Mammary epithelial cell (primary cell): ENCODE measurements at regions of chr20 and their contacts with region 1.

Region 1: DNA sequence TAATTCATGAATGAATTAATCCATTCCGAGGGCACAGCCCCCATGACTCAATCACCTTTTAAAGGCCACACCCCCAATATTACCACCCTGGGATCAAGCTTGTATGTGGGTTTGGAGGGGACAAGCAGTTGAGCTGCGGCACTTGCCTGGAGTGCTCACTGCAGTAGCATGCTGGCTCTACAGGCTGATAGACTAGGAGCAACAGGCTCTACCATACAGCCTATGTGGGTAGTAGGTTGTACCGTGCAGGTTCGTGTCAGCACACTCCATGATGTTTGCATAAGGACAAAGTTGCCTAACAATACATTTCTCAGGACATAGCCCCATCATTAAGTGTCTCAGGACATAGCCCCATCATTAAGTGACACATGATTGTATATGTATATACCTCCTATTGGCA is 25.7 kb upstream of the TAF4 start:
- DNase-seq: no peak
- H3K4me3 ChIP-seq: no peak overlapping the region
- H3K27ac ChIP-seq: no peak overlapping the region
- H3K4me1 ChIP-seq: no peaks in the 10 kb centered on the region
- H3K27me3 ChIP-seq: no peaks in the 10 kb centered on the region
- CTCF ChIP-seq: no peak

Region 2: GRCh38 chr20:62059401-62059800 is 32.0 kb before region 1 on chr20:
- CTCF ChIA-PET with region 1: no interaction called
- dilution Hi-C with region 1: loop called (anchors 5 kb)
- in situ Hi-C with region 1: no loop called
- intact Hi-C with region 1: no loop called
- DNase-seq: no peak
- H3K4me3 ChIP-seq: no peak overlapping the region
- H3K27ac ChIP-seq: no peak overlapping the region
- H3K4me1 ChIP-seq: peaks cover 14% of the 10 kb centered on the region
- H3K27me3 ChIP-seq: no peaks in the 10 kb centered on the region
- CTCF ChIP-seq: no peak

Region 3: DNA sequence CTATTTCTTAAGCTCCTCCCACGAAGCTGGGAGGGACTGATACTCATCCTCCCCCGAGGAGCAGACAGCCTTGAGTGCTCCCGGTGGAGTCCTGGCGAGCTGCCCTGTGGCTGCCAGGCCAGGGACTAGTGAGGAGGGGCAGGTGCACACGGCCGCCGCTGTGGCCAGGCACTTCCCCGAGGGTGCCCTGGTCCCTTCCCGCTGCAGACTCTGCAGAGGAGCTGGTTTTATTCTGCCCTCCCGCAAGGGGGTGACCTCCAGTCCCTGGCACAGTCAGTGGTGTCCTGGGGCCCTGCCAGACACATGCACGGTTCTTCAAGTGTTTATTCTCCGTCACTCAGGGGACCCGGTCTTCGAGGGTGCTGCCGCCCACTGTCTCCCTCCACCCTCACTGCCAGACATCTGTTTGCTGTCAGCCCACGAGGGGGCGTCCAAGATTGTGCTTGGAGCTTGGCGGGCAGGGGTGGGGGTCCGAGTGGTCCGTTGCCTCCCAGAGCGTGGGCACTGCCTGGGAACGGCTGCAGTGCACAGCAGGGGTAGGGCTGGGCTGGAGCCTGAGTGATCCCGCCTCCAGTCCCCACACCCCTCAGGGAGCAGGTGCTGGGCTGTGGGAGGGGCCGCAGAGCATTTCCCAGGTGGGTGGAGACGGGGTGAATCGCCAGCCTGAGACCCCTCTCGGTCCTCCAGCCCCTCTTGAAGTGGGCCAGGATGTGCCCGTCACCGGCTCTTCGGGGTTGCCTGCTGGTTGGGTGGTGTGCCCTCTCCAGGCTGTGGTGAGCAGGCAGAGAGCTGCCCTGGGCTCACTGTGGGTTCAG is 318.7 kb after region 1 on chr20:
- CTCF ChIA-PET with region 1: no interaction called
- dilution Hi-C with region 1: no loop called
- in situ Hi-C with region 1: no loop called
- intact Hi-C with region 1: no loop called
- DNase-seq: no peak
- H3K4me3 ChIP-seq: no peak overlapping the region
- H3K27ac ChIP-seq: no peak overlapping the region
- H3K4me1 ChIP-seq: peaks cover 26% of the 10 kb centered on the region
- H3K27me3 ChIP-seq: no peaks in the 10 kb centered on the region
- CTCF ChIP-seq: peak; percentile 16 to 66

Region 4: DNA sequence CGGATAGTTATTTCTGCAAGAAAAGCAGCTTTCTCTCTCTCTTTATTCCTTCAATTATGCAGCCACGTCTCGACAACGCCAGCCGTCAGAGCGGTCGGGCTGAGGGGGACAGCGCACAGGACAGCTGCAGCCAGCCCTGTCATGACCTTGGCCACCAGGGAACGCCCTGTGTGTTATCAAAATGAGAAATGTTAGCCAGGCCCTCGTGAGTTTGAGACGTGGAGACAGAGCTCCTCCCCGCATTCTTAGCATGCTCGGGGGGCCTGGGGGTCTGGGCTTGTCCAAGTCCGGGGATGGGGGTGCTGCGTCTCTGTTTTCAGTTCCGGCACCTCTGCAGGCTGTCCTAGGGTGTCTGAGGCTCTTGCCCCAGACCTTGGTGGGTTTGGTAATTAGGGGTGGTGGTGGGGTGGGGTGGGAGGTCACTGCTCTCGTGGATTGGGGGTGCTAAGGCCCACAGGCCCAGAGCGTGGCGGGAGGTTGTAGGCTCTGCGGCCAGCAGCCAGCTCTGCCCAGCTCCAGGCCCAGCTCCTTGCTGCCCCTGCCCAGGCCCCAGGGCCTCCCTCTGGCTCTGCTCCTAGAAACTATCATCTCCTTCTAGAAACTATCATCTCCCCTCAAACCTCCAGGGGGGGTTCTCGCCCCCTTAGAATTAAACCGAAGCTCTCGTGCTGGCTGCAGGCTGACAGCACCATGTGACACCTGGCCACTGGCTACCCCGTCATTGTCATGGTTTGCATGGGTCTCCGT is 438.7 kb after region 1 on chr20:
- CTCF ChIA-PET with region 1: no interaction called
- dilution Hi-C with region 1: no loop called
- in situ Hi-C with region 1: no loop called
- intact Hi-C with region 1: no loop called
- DNase-seq: no peak
- H3K4me3 ChIP-seq: no peak overlapping the region
- H3K27ac ChIP-seq: no peak overlapping the region
- H3K4me1 ChIP-seq: no peaks in the 10 kb centered on the region
- H3K27me3 ChIP-seq: peaks cover 12% of the 10 kb centered on the region
- CTCF ChIP-seq: no peak